CD14-positive monocyte (primary cell): ENCODE measurements at regions of chr20 and their contacts with region 1.

Region 1: DNA sequence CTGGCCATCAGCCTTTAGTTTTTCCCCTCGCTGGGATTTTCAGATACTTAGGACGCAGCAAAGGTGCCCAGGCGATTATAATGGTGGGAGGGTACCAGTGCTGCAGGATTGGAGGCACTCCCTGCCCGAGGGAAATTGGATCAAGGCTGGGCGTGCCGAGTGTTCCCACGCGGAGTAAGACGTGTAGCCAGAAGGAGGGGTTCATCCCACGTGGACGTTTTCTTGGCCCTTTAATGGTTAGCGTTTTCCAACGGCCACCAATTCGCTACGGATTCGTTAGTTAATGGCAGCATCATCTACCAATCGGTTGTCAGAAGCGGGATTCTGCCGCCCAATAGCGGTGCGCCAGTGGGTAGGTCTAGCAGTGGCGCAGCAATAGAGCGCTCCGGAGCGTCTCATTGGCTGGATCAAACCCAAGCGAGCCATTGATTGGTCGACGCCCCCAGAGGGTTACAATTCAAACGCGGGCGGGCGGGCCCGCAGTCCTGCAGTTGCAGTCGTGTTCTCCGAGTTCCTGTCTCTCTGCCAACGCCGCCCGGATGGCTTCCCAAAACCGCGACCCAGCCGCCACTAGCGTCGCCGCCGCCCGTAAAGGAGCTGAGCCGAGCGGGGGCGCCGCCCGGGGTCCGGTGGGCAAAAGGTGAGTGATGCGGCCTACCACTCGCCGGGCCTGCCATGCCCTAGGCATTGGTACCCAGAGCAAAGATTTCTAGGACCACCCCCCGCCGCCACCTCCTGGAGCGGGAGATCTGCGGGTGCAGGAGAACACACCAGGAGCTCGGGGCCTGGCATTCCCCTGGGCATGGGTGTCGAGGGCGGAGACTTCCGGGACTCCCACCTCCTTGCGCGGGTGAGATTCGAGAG is at the start of gene UBE2C:
- DNase-seq: peak; percentile 95 to 100 (median 97)
- H3K4me3 ChIP-seq: peak within 1 kb of the TSS; percentile 57 to 85 (median 80)
- H3K4me3 Mint-ChIP-seq: peak within 1 kb of the TSS; percentile 67 to 84
- H3K27ac ChIP-seq: peak within 1 kb of the TSS in 1 of 2 donors; percentile 65
- H3K27ac Mint-ChIP-seq: peak within 1 kb of the TSS; percentile 34 to 91 (median 75)
- H3K4me1 ChIP-seq: peaks cover 18 to 24% of the 10 kb centered on the region in 2 donors
- H3K4me1 Mint-ChIP-seq: peaks cover 22% of the 10 kb centered on the region
- H3K27me3 ChIP-seq: no peaks in the 10 kb centered on the region
- H3K27me3 Mint-ChIP-seq: no peaks in the 10 kb centered on the region
- CTCF ChIP-seq: no peak
- polyA plus RNA-seq, gene UBE2C: 0.15 to 0.58 TPM in 2 of 3 donors, not detected in the other

Region 2: DNA sequence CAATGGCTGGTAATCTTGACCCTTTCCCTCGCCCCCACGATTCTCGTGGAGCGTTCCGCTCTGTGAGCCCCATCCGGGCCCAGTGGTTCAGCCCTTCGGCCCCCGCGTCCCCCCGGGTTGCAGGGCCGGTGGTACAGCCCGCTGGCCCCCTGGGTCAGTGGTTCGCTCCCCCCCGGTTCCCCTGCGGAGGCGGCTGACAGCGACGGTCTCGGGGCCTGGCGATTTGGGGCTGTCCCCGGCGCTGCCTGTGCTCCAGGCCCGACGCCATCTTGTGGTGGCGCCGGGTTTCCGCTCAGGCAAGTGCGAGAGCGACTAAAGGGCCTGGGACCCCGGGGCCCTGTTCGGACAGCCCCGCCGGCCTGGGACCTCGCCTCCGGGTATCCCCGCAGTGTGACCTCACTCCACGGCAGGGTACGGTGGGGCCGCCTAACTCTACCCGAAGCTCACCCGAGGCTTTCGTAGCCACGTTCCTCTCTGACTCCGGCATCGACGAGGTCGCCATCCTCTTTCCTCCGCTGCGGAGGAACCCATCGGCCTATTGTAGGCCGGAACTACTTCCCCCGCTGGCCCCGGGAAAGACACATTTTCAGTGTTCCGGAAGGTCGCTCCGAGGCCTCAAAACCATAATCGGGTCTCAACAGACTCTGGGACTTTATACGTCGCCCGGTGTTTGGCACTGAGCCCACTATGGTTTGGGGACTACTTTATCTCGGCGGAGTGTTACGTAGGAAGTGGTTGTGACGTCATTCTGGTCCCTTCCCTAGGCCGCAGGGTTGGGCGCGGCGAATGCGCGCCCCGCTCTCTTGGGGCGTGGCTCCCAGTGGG is 159.5 kb after region 1 on chr20 and contains the start of gene ZNF335:
- intact Hi-C with region 1: loop called in 1 of 2 experiments (anchors 5 kb)
- DNase-seq: peak; percentile 86 to 98 (median 94)
- H3K4me3 ChIP-seq: peak within 1 kb of the TSS; percentile 90 to 96 (median 96)
- H3K4me3 Mint-ChIP-seq: peak within 1 kb of the TSS; percentile 83 to 88
- H3K27ac ChIP-seq: peak within 1 kb of the TSS; percentile 97 to 99
- H3K27ac Mint-ChIP-seq: peak within 1 kb of the TSS; percentile 90 to 100 (median 100)
- H3K4me1 ChIP-seq: peaks cover 45 to 47% of the 10 kb centered on the region in 2 donors
- H3K4me1 Mint-ChIP-seq: peaks cover 37% of the 10 kb centered on the region
- H3K27me3 ChIP-seq: no peaks in the 10 kb centered on the region
- H3K27me3 Mint-ChIP-seq: peaks cover 0 to 2% (median 0%) of the 10 kb centered on the region in 3 donors
- CTCF ChIP-seq: peak; percentile 22
- polyA plus RNA-seq, gene ZNF335: 2.7 to 39.6 (median 3.1) TPM